ENCODE measurements at regions of chr5 and their contacts with region 1.

Region 1: GRCh38 chr5:136769900-136770684 is 404.7 kb upstream of the TRPC7 start:
- DNase-seq: no peak
- H3K4me3 ChIP-seq: no peak overlapping the region
- H3K27ac ChIP-seq: no peak overlapping the region
- H3K4me1 ChIP-seq: no peaks in the 10 kb centered on the region
- H3K27me3 ChIP-seq: no peaks in the 10 kb centered on the region
- CTCF ChIP-seq: peak in 10 of 11 experiments; percentile 25 to 68 (median 59)
- POLR2A ChIP-seq: no peak

Region 2: DNA sequence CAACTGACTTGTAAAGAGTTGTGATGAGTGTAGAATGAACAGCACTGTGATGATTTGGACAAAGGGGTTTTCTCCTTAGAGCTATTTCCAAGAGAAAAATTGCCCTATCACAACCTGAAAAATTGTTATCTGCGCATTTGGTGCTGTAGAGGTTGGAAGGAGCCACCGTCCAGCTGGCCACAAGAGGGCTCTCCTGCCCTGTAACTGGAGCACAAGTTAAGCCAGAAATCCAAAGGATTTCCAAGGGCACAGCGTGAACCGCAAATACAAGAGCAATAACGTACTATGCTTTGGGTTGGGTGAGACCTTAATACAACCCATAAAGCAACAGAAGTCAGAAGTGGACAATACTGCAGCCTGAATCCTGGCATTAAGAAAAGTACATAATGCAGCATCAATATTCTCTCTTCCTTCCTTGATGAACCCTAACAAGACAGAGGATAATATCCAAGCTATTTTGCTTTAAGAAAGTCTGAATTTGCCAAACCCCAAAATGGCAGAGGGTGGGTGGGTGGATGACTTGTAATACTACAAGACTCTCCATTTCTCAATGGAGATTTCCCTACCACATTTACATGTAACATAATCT is 520.3 kb before region 1 on chr5:
- intact Hi-C with region 1: loop called (anchors 5 kb)
- DNase-seq: no peak
- H3K4me3 ChIP-seq: no peak overlapping the region
- H3K27ac ChIP-seq: no peak overlapping the region
- H3K4me1 ChIP-seq: no peaks in the 10 kb centered on the region
- H3K27me3 ChIP-seq: peaks cover 0 to 17% (median 0%) of the 10 kb centered on the region in 7 donors
- CTCF ChIP-seq: peak in 9 of 11 experiments; percentile 27 to 67 (median 52)
- POLR2A ChIP-seq: no peak

Region 3: DNA sequence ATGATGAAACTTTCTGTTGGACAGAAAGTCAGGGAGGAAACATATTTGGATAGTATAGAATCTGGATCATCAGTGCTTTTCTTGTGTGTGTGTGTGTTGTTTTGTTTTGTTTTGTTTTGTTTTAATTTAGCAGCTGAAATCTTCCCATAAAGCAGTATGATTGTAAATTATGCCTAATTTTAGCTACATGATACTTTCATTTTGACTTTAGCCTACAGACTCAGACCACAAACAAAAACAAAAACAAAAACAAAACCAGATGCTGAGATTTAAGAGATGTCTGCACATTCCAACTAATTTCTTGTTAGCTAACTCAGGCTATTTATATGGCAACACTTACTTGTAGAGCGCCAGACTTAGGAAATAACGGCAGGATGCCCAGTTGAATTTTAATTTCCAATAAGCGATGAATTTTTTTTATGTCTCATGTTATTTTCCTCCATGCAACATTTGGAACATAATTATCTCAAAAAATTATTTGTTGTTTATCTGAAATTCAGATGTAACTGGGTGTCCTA is 285.2 kb before region 1 on chr5:
- intact Hi-C with region 1: no loop called
- DNase-seq: no peak
- H3K4me3 ChIP-seq: no peak overlapping the region
- H3K27ac ChIP-seq: no peak overlapping the region
- H3K4me1 ChIP-seq: no peaks in the 10 kb centered on the region
- H3K27me3 ChIP-seq: no peaks in the 10 kb centered on the region
- CTCF ChIP-seq: no peak
- POLR2A ChIP-seq: no peak